Activated T-helper 1 cell treated with anti-CD3 and anti-CD28 coated beads, Interleukin-12 subunit alpha, Interleukin-12 subunit beta, Interleukin-2, Interleukin-4 antibody, amounts not matched to agents 30 ng/mL and 10 ng/mL and 1 ng/mL, durations not matched to agents 14 hours and 24 hours and 36 hours (primary cell): ENCODE measurements at regions of chr20 and their contacts with region 1.

Region 1: GRCh38 chr20:57619051-57619834 is 983 bp downstream of the ZBP1 start:
- DNase-seq: peak; percentile 71
- H3K4me3 Mint-ChIP-seq: peak overlapping the region; percentile 72
- H3K27ac Mint-ChIP-seq: peak overlapping the region; percentile 86
- H3K4me1 Mint-ChIP-seq: peaks cover 51% of the 10 kb centered on the region
- H3K27me3 Mint-ChIP-seq: peaks cover 17% of the 10 kb centered on the region

Region 2: GRCh38 chr20:57351042-57351783 is 268.0 kb before region 1 on chr20 and contains the start of gene RAE1:
- intact Hi-C with region 1: loop called (anchors 1 kb)
- DNase-seq: peak; percentile 89
- H3K4me3 Mint-ChIP-seq: peak within 1 kb of the TSS; percentile 96
- H3K27ac Mint-ChIP-seq: peak within 1 kb of the TSS; percentile 89
- H3K4me1 Mint-ChIP-seq: peaks cover 32% of the 10 kb centered on the region
- H3K27me3 Mint-ChIP-seq: peaks cover 2% of the 10 kb centered on the region
- total RNA-seq, gene RAE1: 54.4 and 59.2 TPM in 2 replicates

Region 3: DNA sequence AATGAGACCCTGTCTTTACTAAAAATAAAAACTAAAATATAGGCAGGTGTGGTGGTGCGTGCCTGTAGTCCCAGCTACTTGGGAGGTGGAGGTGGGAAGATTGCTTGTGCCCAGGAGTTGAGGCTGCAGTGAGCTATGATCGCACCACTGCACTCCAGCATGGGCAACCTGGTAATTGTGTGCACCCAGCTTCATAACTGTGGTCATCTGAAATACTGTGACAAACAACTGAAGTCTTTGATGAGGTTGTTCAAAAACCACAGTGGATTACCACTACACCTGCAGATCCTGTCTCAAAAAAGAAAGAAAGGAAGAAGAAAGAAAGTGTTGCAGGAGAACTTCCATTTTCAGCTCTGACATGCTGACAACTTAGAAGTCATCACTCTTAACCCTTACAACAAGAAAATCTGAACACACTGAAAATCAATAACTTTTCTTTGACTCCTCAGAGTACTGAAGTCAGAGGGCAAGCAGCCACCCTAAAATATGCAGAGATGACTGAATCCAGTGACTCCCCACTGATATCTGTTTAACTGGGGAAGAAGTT is 14.8 kb after region 1 on chr20:
- intact Hi-C with region 1: loop called (anchors 2 kb)
- DNase-seq: peak; percentile 17
- H3K4me3 Mint-ChIP-seq: no peak overlapping the region
- H3K27ac Mint-ChIP-seq: no peak overlapping the region
- H3K4me1 Mint-ChIP-seq: peaks cover 29% of the 10 kb centered on the region
- H3K27me3 Mint-ChIP-seq: peaks cover 76% of the 10 kb centered on the region

Region 4: DNA sequence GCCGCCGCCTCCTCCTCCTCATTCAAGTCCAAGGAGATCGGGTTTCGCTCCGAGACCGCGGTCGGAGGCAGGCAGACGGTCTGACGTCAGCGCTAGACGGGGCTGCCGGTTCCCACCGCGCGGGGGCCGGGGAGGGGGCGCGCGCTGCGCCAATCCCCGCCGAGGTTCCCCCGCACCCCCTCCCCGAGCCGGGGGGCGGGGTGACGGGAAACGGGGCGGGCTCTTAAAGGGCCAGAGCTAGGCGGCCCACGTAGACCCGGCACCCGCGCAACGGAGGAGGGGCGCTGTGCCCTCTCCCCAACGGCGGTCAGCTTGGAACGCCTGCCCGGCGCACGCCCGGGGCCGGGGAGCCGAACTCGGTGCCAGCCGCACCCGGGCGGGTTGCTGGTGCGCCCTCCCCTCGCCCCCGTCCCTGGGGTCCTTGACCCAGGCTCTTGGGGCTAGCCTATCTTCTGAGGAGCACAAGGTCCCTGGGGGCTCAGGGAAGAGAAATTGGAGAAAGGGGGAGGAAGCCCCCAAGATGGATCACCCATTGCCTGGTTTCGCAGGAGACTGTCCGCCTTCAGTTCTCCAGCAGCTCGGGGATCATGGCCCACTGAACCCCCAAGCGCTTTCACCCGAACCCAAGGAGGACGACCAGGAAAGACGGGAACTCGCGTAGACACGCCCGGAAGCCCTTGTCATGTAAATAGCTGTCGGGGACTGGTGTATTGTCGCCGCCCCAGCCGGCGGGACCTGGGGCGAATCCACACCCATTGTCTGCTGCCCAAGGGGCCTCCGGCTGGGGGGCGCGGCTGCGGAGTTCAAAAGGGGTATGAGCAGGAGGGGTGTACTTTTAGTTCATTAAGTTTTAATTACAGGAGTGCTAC is 90.9 kb after region 1 on chr20 and contains the start of gene PMEPA1:
- intact Hi-C with region 1: loop called (anchors 1 kb)
- DNase-seq: peak; percentile 79
- H3K4me3 Mint-ChIP-seq: peak within 1 kb of the TSS; percentile 87
- H3K27ac Mint-ChIP-seq: peak within 1 kb of the TSS; percentile 77
- H3K4me1 Mint-ChIP-seq: peaks cover 15% of the 10 kb centered on the region
- H3K27me3 Mint-ChIP-seq: peaks cover 39% of the 10 kb centered on the region
- total RNA-seq, gene PMEPA1: 0.57 and 0.66 TPM in 2 replicates

Region 5: DNA sequence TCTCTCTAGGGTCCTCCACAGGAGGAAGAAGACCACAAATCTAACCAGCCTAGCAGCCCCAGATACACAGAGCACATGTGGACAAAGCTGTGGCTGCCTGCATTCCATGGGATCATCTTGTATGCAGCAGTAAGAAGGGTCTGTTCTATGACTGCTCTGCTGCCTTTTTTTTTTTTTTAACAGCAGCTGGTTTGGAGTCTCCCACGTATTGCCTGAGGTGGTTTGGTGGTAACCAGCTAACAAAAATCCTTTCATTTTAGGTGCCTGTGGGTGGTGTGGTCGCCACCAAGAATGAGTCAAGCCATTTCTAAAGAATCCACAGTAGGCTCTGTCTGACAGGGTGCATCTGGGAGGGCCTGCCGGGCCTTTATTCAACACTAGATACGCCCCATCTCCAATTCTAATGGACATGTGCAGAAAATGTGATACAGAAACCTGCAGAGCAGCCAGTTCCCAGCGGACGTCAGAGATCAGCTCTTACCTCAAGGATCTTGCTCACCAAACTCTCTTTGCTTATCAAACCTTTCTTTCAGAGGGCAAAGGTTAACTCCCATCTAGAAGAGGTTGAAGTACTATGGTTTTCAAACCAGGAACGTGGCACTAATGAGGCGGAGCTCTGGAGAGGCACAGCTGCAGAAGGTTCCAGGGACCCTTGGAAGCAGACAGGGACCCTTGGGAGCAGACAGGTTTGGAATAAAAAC is 1199.5 kb after region 1 on chr20:
- intact Hi-C with region 1: loop called (anchors 2 kb)
- DNase-seq: peak; percentile 55
- H3K4me3 Mint-ChIP-seq: peak overlapping the region; percentile 20
- H3K27ac Mint-ChIP-seq: peak overlapping the region; percentile 53
- H3K4me1 Mint-ChIP-seq: peaks cover 16% of the 10 kb centered on the region
- H3K27me3 Mint-ChIP-seq: peaks cover 41% of the 10 kb centered on the region